Endothelial cell of umbilical vein (primary cell): ENCODE measurements at regions of chr2 and their contacts with region 1.

Region 1: GRCh38 chr2:219057709-219058540 is 2.8 kb downstream of the IHH start:
- DNase-seq: peak; percentile 60
- H3K4me3 ChIP-seq: no peak overlapping the region
- H3K27ac ChIP-seq: no peak overlapping the region
- H3K4me1 ChIP-seq: no peaks in the 10 kb centered on the region
- H3K27me3 ChIP-seq: peaks cover 52 to 66% of the 10 kb centered on the region in 2 experiments
- CTCF ChIP-seq: peak; percentile 85 to 94
- POLR2A ChIP-seq: no peak

Region 2: GRCh38 chr2:219073413-219074129 is 15.6 kb after region 1 on chr2:
- CTCF ChIA-PET with region 1: interaction called, 38 read pairs
- POLR2A ChIA-PET with region 1: no interaction called
- dilution Hi-C with region 1: no loop called
- intact Hi-C with region 1: no loop called
- DNase-seq: peak; percentile 23
- H3K4me3 ChIP-seq: no peak overlapping the region
- H3K27ac ChIP-seq: no peak overlapping the region
- H3K4me1 ChIP-seq: no peaks in the 10 kb centered on the region
- H3K27me3 ChIP-seq: no peaks in the 10 kb centered on the region
- CTCF ChIP-seq: peak; percentile 60 to 65
- POLR2A ChIP-seq: no peak

Region 3: GRCh38 chr2:219142329-219142728 is 84.4 kb after region 1 on chr2:
- CTCF ChIA-PET with region 1: interaction called, 11 read pairs
- POLR2A ChIA-PET with region 1: no interaction called
- dilution Hi-C with region 1: no loop called
- intact Hi-C with region 1: no loop called
- DNase-seq: no peak
- H3K4me3 ChIP-seq: no peak overlapping the region
- H3K27ac ChIP-seq: no peak overlapping the region
- H3K4me1 ChIP-seq: no peaks in the 10 kb centered on the region
- H3K27me3 ChIP-seq: no peaks in the 10 kb centered on the region
- CTCF ChIP-seq: no peak
- POLR2A ChIP-seq: no peak

Region 4: GRCh38 chr2:219149667-219150066 is 91.7 kb after region 1 on chr2:
- CTCF ChIA-PET with region 1: interaction called, 148 read pairs
- POLR2A ChIA-PET with region 1: no interaction called
- dilution Hi-C with region 1: no loop called
- intact Hi-C with region 1: no loop called
- DNase-seq: peak; percentile 59
- H3K4me3 ChIP-seq: no peak overlapping the region
- H3K27ac ChIP-seq: no peak overlapping the region
- H3K4me1 ChIP-seq: no peaks in the 10 kb centered on the region
- H3K27me3 ChIP-seq: no peaks in the 10 kb centered on the region
- CTCF ChIP-seq: no peak
- POLR2A ChIP-seq: no peak